Naive thymus-derived CD4-positive, alpha-beta T cell (primary cell): ENCODE measurements at regions of chr5 and their contacts with region 1.

Region 1: GRCh38 chr5:79133657-79134451 is 22.2 kb downstream of the BHMT start:
- DNase-seq: peak; percentile 26 to 60 (median 48)
- ATAC-seq: peak; percentile 84
- H3K4me3 ChIP-seq: peak overlapping the region; percentile 42
- H3K4me3 Mint-ChIP-seq: peak overlapping the region; percentile 45 to 80 (median 76)
- H3K27ac ChIP-seq: no peak overlapping the region
- H3K27ac Mint-ChIP-seq: peak overlapping the region in 4 of 9 donors; percentile 4 to 76 (median 42)
- H3K4me1 ChIP-seq: peaks cover 9 to 11% of the 10 kb centered on the region in 2 donors
- H3K4me1 Mint-ChIP-seq: peaks cover 7 to 17% (median 10%) of the 10 kb centered on the region in 7 donors
- H3K27me3 ChIP-seq: no peaks in the 10 kb centered on the region
- H3K27me3 Mint-ChIP-seq: peaks cover 0 to 9% (median 4%) of the 10 kb centered on the region in 5 donors

Region 2: GRCh38 chr5:78467752-78468357 is 666.0 kb before region 1 on chr5:
- CTCF ChIA-PET with region 1: no interaction called
- POLR2A ChIA-PET with region 1: no interaction called
- intact Hi-C with region 1: loop called in 1 of 2 experiments (anchors 5 kb)
- DNase-seq: peak in 2 of 9 donors; percentile 11 to 15
- ATAC-seq: peak; percentile 46
- H3K4me3 ChIP-seq: no peak overlapping the region
- H3K4me3 Mint-ChIP-seq: no peak overlapping the region
- H3K27ac ChIP-seq: no peak overlapping the region
- H3K27ac Mint-ChIP-seq: no peak overlapping the region
- H3K4me1 ChIP-seq: no peaks in the 10 kb centered on the region
- H3K4me1 Mint-ChIP-seq: peaks cover 0 to 9% (median 0%) of the 10 kb centered on the region in 7 donors
- H3K27me3 ChIP-seq: no peaks in the 10 kb centered on the region
- H3K27me3 Mint-ChIP-seq: no peaks in the 10 kb centered on the region

Region 3: GRCh38 chr5:78899922-78900362 is 233.9 kb before region 1 on chr5:
- CTCF ChIA-PET with region 1: no interaction called
- POLR2A ChIA-PET with region 1: no interaction called
- intact Hi-C with region 1: loop called in 1 of 2 experiments (anchors 1 kb)
- DNase-seq: peak in 1 of 9 donors; percentile 33
- ATAC-seq: no peak
- H3K4me3 ChIP-seq: no peak overlapping the region
- H3K4me3 Mint-ChIP-seq: no peak overlapping the region
- H3K27ac ChIP-seq: no peak overlapping the region
- H3K27ac Mint-ChIP-seq: no peak overlapping the region
- H3K4me1 ChIP-seq: no peaks in the 10 kb centered on the region
- H3K4me1 Mint-ChIP-seq: no peaks in the 10 kb centered on the region
- H3K27me3 ChIP-seq: no peaks in the 10 kb centered on the region
- H3K27me3 Mint-ChIP-seq: no peaks in the 10 kb centered on the region

Region 4: DNA sequence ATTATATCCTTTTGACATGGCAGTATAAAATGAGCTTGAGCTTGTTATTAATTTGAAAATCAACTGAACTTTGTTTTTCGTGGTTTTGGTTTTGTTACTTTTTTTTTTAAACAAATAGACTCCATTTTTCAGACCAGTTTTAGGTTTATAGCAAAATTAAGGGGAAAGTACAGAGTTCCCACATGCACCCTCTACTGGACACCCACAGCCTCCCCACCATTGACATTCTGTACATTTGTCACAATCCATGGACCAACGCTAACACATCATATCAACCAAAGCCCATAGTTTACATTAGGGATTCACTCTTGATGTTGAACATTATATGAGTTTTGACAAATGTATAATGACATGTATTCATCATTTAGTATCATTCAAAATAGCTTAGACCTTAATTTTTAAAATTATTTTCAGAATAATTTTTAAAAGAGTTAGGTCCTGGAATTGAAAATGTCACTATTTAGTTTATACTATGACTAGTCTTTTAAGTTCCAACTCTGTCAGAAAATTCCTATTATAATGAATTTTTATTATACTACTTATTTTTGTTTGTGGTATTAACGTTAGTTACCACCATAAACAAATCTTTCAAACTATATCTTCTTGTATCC is 66.8 kb after region 1 on chr5:
- CTCF ChIA-PET with region 1: interaction called, 4 read pairs
- POLR2A ChIA-PET with region 1: no interaction called
- intact Hi-C with region 1: loop called in 1 of 2 experiments (anchors 5 kb)
- DNase-seq: peak in 1 of 9 donors; percentile 3
- ATAC-seq: peak; percentile 51
- H3K4me3 ChIP-seq: no peak overlapping the region
- H3K4me3 Mint-ChIP-seq: no peak overlapping the region
- H3K27ac ChIP-seq: no peak overlapping the region
- H3K27ac Mint-ChIP-seq: no peak overlapping the region
- H3K4me1 ChIP-seq: no peaks in the 10 kb centered on the region
- H3K4me1 Mint-ChIP-seq: no peaks in the 10 kb centered on the region
- H3K27me3 ChIP-seq: no peaks in the 10 kb centered on the region
- H3K27me3 Mint-ChIP-seq: no peaks in the 10 kb centered on the region

Region 5: DNA sequence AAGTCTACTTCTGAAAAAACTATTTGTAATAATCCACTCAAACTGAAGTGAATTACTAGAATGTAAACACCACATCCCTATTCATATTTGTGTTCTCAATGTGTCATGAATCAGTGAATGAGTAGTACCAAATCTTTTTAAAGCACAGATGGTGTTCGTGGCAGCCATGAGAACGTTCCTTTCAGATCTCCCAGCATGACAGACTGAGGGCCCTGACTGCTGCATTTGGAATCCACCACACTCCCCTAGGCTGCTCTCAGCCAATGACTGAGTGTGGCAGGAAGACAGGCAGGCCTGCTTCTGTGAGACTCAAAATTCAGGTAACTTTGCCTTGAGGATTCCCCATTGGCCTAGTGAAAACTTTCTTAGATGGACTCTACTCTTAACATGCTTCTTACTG is 91.2 kb after region 1 on chr5:
- CTCF ChIA-PET with region 1: no interaction called
- POLR2A ChIA-PET with region 1: no interaction called
- intact Hi-C with region 1: no loop called
- DNase-seq: no peak
- ATAC-seq: no peak
- H3K4me3 ChIP-seq: no peak overlapping the region
- H3K4me3 Mint-ChIP-seq: no peak overlapping the region
- H3K27ac ChIP-seq: no peak overlapping the region
- H3K27ac Mint-ChIP-seq: peak overlapping the region in 1 of 9 donors; percentile 37
- H3K4me1 ChIP-seq: no peaks in the 10 kb centered on the region
- H3K4me1 Mint-ChIP-seq: peaks cover 0 to 8% (median 0%) of the 10 kb centered on the region in 7 donors
- H3K27me3 ChIP-seq: no peaks in the 10 kb centered on the region
- H3K27me3 Mint-ChIP-seq: no peaks in the 10 kb centered on the region

Region 6: GRCh38 chr5:79396265-79396664 is 262.4 kb after region 1 on chr5:
- CTCF ChIA-PET with region 1: no interaction called
- POLR2A ChIA-PET with region 1: no interaction called
- intact Hi-C with region 1: no loop called
- DNase-seq: no peak
- ATAC-seq: no peak
- H3K4me3 ChIP-seq: no peak overlapping the region
- H3K4me3 Mint-ChIP-seq: no peak overlapping the region
- H3K27ac ChIP-seq: no peak overlapping the region
- H3K27ac Mint-ChIP-seq: no peak overlapping the region
- H3K4me1 ChIP-seq: no peaks in the 10 kb centered on the region
- H3K4me1 Mint-ChIP-seq: no peaks in the 10 kb centered on the region
- H3K27me3 ChIP-seq: no peaks in the 10 kb centered on the region
- H3K27me3 Mint-ChIP-seq: no peaks in the 10 kb centered on the region

Region 7: DNA sequence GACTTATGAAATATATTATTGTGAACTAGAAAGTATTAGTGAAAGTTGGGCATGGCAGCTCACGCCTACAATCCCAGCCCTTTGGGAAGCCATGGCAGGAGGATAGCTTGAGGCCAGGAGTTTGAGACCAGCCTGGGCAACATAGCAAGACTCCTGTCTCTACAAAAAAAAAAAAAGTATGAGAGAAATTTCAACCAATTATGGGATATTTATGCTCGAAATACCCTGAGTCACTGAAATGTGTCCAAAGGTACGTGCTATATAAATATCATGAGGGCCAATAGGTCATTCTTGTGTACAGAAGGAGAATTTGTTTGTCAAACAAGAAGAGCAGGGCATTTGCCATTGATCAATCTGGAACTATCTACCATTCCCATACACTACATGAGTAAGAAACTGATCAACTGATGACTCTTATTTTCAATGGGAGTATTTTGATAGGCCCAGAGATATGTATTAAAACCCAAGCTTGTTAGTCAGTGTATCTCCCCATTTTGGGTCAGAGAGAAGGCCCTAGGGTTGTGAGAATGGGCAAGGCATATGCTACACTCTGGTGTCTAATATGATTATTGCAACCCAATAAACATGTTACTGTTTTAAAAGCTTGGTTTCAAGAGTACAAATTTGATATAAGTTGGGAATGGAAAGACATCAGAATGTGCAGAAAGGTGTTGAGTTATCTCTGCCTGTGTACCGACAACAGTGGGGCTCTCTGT is 401.8 kb after region 1 on chr5:
- CTCF ChIA-PET with region 1: no interaction called
- POLR2A ChIA-PET with region 1: no interaction called
- intact Hi-C with region 1: loop called in 1 of 2 experiments (anchors 1 kb)
- DNase-seq: no peak
- ATAC-seq: no peak
- H3K4me3 ChIP-seq: no peak overlapping the region
- H3K4me3 Mint-ChIP-seq: no peak overlapping the region
- H3K27ac ChIP-seq: no peak overlapping the region
- H3K27ac Mint-ChIP-seq: no peak overlapping the region
- H3K4me1 ChIP-seq: no peaks in the 10 kb centered on the region
- H3K4me1 Mint-ChIP-seq: no peaks in the 10 kb centered on the region
- H3K27me3 ChIP-seq: no peaks in the 10 kb centered on the region
- H3K27me3 Mint-ChIP-seq: peaks cover 3 to 11% (median 5%) of the 10 kb centered on the region in 5 donors

Region 8: DNA sequence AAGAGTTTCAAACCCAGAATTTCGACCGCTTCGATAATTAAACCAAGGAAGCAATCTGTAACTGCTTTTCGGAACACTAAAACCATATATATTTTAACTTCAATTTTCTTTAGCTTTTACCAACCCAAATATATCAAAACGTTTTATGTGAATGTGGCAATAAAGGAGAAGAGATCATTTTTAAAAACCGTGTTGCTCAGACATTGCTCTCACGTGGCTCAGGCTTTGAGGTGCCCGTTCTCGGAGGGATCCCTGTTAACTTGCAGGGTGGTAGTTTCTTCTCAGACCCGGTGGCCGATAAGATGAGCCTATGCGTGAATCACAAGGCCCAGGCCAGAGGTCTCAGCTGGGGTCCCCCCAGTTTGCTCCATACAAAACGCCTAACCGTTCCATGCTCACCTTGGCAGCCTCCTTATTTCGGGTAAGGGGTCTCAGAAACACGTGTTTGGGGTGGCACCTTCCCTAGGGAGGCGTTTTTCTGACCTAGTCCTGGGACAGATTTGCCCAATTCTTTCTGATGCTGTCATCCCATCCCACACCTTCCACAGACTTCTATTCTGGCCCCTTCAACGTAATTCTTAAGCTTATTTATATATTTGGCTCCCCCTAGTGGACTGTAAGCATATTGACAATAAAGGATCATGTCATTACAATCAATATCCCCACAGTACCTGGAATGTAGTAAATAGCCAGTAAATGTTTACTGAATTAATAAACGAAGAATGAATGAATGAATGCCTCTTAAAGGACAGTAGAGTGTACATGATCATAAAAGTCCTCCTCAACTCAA is 949.4 kb after region 1 on chr5:
- CTCF ChIA-PET with region 1: no interaction called
- POLR2A ChIA-PET with region 1: no interaction called
- intact Hi-C with region 1: loop called (anchors 1 to 10 kb)
- DNase-seq: peak; percentile 13 to 63 (median 50)
- ATAC-seq: peak; percentile 87
- H3K4me3 ChIP-seq: peak overlapping the region; percentile 6
- H3K4me3 Mint-ChIP-seq: peak overlapping the region; percentile 76 to 88 (median 82)
- H3K27ac ChIP-seq: peak overlapping the region; percentile 22
- H3K27ac Mint-ChIP-seq: peak overlapping the region; percentile 26 to 92 (median 62)
- H3K4me1 ChIP-seq: no peaks in the 10 kb centered on the region
- H3K4me1 Mint-ChIP-seq: peaks cover 6 to 17% (median 12%) of the 10 kb centered on the region in 7 donors
- H3K27me3 ChIP-seq: no peaks in the 10 kb centered on the region
- H3K27me3 Mint-ChIP-seq: peaks cover 0 to 3% (median 0%) of the 10 kb centered on the region in 5 donors